MCF 10A (cell line): ENCODE measurements at regions of chr6 and their contacts with region 1.

Region 1: GRCh38 chr6:52419809-52420670 is at the start of gene EFHC1:
- DNase-seq: peak; percentile 97
- H3K4me3 Mint-ChIP-seq: no peak within 1 kb of the TSS
- H3K27ac Mint-ChIP-seq: no peak within 1 kb of the TSS
- H3K4me1 Mint-ChIP-seq: peaks cover 32% of the 10 kb centered on the region
- H3K27me3 Mint-ChIP-seq: no peaks in the 10 kb centered on the region
- CTCF ChIP-seq: no peak
- total RNA-seq, gene EFHC1: 26.3 and 26.9 TPM in 2 replicates

Region 2: GRCh38 chr6:50549026-50549425 is 1871.0 kb before region 1 on chr6:
- CTCF ChIA-PET with region 1: no interaction called
- POLR2A ChIA-PET with region 1: no interaction called
- intact Hi-C with region 1: no loop called
- DNase-seq: no peak
- H3K4me3 Mint-ChIP-seq: no peak overlapping the region
- H3K27ac Mint-ChIP-seq: no peak overlapping the region
- H3K4me1 Mint-ChIP-seq: no peaks in the 10 kb centered on the region
- H3K27me3 Mint-ChIP-seq: peaks cover 12% of the 10 kb centered on the region
- CTCF ChIP-seq: no peak

Region 3: DNA sequence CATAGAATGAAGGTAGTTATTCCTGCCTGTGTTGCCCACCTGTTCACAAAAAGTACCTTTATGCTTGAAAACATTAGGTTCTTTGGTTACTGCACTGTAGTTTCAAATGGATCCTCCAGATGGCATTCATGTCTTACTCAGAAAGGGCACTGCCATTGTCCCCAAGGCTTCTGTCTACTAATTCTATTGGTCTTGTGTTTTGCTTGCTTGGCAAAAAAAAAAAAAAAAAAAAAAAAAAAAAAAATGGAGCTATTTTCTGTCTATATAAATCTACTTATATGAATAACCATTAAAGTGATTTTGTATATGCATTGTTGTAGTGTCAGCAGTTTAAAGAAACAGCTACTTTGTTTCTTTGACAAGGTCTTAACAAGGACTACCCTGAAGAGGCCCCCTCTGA is 12.6 kb before region 1 on chr6:
- CTCF ChIA-PET with region 1: interaction called, 10 read pairs
- POLR2A ChIA-PET with region 1: interaction called, 5 read pairs
- intact Hi-C with region 1: no loop called
- DNase-seq: peak; percentile 60
- H3K4me3 Mint-ChIP-seq: no peak overlapping the region
- H3K27ac Mint-ChIP-seq: no peak overlapping the region
- H3K4me1 Mint-ChIP-seq: peaks cover 15% of the 10 kb centered on the region
- H3K27me3 Mint-ChIP-seq: no peaks in the 10 kb centered on the region
- CTCF ChIP-seq: peak; percentile 51

Region 4: DNA sequence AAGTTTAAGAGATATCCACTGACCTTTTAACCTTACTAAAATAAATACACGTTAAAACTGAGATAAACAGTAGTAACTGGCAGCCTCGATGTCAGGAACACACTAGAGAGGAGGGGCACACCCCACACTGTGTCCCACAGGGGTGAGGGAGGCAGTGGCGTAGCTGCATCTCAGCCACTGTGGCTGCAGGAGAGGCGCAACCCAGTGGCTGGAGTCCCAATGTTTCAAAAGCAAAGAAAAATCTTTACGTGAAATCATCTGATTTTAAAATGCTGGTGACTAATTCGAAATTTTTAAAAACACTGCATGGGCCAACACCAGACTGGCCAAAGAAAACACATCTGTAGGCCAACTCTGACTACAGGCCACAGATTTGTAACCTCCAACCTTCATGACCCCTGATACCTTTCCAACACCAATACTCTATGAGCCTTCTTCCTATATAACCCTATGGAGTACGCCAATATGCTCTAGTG is 102.1 kb after region 1 on chr6:
- CTCF ChIA-PET with region 1: interaction called, 3 read pairs
- POLR2A ChIA-PET with region 1: interaction called, 17 read pairs
- intact Hi-C with region 1: loop called (anchors 5 kb)
- DNase-seq: peak; percentile 74
- H3K4me3 Mint-ChIP-seq: peak overlapping the region; percentile 18
- H3K27ac Mint-ChIP-seq: peak overlapping the region; percentile 83
- H3K4me1 Mint-ChIP-seq: peaks cover 64% of the 10 kb centered on the region
- H3K27me3 Mint-ChIP-seq: no peaks in the 10 kb centered on the region
- CTCF ChIP-seq: no peak

Region 5: GRCh38 chr6:52598123-52598823 is 178.2 kb after region 1 on chr6:
- CTCF ChIA-PET with region 1: interaction called, 74 read pairs
- POLR2A ChIA-PET with region 1: interaction called, 11 read pairs
- intact Hi-C with region 1: loop called (anchors 1 kb)
- DNase-seq: peak; percentile 52
- H3K4me3 Mint-ChIP-seq: no peak overlapping the region
- H3K27ac Mint-ChIP-seq: no peak overlapping the region
- H3K4me1 Mint-ChIP-seq: peaks cover 22% of the 10 kb centered on the region
- H3K27me3 Mint-ChIP-seq: no peaks in the 10 kb centered on the region
- CTCF ChIP-seq: peak; percentile 39

Region 6: DNA sequence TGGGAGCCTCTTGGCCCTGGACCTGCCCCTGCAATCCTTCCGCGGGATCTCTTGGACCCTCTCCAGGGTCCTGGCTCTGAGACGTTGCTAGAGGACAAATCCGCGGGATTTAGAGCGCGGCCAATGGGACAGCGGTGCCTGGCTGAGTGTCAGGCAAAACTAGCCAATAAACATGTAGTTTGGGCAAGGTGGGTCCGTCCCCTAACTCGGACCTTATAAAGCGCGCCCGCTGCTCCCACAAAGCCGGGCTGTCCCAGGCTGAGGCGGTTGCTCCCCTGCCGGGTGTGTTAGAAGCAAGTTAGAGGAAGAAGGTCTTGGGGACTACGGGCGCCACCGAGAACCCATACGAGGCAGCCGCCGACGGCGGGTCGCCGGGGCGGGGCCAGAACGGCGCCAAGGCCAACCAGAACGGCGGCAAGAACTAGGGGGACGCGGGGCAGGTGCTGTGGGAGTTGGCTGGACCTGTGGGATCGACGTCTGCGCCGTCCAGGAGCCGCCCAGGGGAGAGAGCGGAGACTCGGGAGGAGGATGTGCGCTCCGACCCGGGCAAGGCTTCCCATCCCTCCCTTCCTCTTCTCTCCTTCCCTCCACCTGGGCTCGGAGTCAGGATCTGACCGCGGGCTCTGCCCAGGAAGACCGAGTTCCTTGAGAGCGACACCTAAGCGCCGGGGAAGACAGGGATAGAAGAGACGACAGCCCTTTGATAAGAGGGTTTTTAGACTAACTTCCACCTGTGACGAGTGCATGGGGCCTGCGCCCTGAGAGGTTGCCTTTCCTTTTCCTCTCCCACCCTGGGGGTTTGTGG is 244.3 kb after region 1 on chr6:
- CTCF ChIA-PET with region 1: interaction called, 101 read pairs
- POLR2A ChIA-PET with region 1: interaction called, 19 read pairs
- intact Hi-C with region 1: no loop called
- DNase-seq: peak; percentile 94
- H3K4me3 Mint-ChIP-seq: no peak overlapping the region
- H3K27ac Mint-ChIP-seq: no peak overlapping the region
- H3K4me1 Mint-ChIP-seq: no peaks in the 10 kb centered on the region
- H3K27me3 Mint-ChIP-seq: no peaks in the 10 kb centered on the region
- CTCF ChIP-seq: no peak